ENCODE measurements at regions of chr3 and their contacts with region 1.

Region 1: GRCh38 chr3:193572426-193572908 is 17.8 kb upstream of the ATP13A4 start:
- DNase-seq: peak; percentile 71 to 87 (median 75)
- H3K4me3 ChIP-seq: no peak overlapping the region
- H3K27ac ChIP-seq: no peak overlapping the region
- H3K4me1 ChIP-seq: no peaks in the 10 kb centered on the region
- H3K27me3 ChIP-seq: no peaks in the 10 kb centered on the region
- CTCF ChIP-seq: peak; percentile 63 to 82 (median 78)
- POLR2A ChIP-seq: peak in 1 of 2 donors; percentile 11

Region 2: DNA sequence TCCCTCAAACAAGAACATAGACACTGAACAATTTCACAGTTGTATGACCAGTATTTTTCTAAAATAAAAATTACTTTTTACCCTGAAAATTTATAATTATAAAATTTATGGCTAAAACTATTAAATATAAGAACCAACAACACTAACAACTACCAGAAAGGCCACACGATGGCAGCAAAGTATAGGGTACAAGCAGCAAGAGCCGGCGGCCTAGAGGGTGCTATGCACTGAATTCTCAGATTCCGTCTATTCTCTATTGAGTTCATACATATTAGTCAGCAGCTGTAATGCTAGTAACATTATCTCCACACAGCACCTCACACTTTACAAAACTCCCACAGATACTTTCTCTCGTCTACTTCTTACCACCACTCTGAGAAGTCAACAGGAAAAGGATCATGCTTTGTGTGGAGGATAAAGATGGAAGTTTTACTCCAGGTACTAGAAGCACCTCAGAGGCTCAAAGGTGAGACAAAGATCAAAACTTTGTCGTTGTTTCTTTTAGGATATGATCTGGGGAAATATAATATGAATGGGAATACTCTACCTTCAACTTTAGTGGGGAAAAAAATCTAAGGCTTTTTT is 1005.7 kb before region 1 on chr3:
- intact Hi-C with region 1: loop called in 1 of 2 experiments (anchors 5 kb)
- DNase-seq: peak; percentile 68 to 92 (median 87)
- H3K4me3 ChIP-seq: no peak overlapping the region
- H3K27ac ChIP-seq: no peak overlapping the region
- H3K4me1 ChIP-seq: peaks cover 0 to 17% of the 10 kb centered on the region in 2 donors
- H3K27me3 ChIP-seq: no peaks in the 10 kb centered on the region
- CTCF ChIP-seq: peak; percentile 64 to 88 (median 74)
- POLR2A ChIP-seq: no peak

Region 3: GRCh38 chr3:192802957-192803899 is 769.2 kb before region 1 on chr3:
- intact Hi-C with region 1: loop called in 1 of 2 experiments (anchors 10 kb)
- DNase-seq: no peak
- H3K4me3 ChIP-seq: no peak overlapping the region
- H3K27ac ChIP-seq: no peak overlapping the region
- H3K4me1 ChIP-seq: no peaks in the 10 kb centered on the region
- H3K27me3 ChIP-seq: no peaks in the 10 kb centered on the region
- CTCF ChIP-seq: peak; percentile 46 to 63 (median 54)
- POLR2A ChIP-seq: no peak

Region 4: GRCh38 chr3:192816351-192816750 is 756.1 kb before region 1 on chr3:
- intact Hi-C with region 1: loop called in 1 of 2 experiments (anchors 5 kb)
- DNase-seq: peak in 1 of 7 donors; percentile 37
- H3K4me3 ChIP-seq: no peak overlapping the region
- H3K27ac ChIP-seq: no peak overlapping the region
- H3K4me1 ChIP-seq: no peaks in the 10 kb centered on the region
- H3K27me3 ChIP-seq: no peaks in the 10 kb centered on the region
- CTCF ChIP-seq: peak; percentile 55 to 86 (median 78)
- POLR2A ChIP-seq: no peak

Region 5: GRCh38 chr3:193040836-193041672 is 531.4 kb before region 1 on chr3:
- intact Hi-C with region 1: loop called in 1 of 2 experiments (anchors 10 kb)
- DNase-seq: peak in 2 of 7 donors; percentile 1 to 14
- H3K4me3 ChIP-seq: no peak overlapping the region
- H3K27ac ChIP-seq: no peak overlapping the region
- H3K4me1 ChIP-seq: no peaks in the 10 kb centered on the region
- H3K27me3 ChIP-seq: no peaks in the 10 kb centered on the region
- CTCF ChIP-seq: peak; percentile 52 to 87 (median 57)
- POLR2A ChIP-seq: no peak

Region 6: DNA sequence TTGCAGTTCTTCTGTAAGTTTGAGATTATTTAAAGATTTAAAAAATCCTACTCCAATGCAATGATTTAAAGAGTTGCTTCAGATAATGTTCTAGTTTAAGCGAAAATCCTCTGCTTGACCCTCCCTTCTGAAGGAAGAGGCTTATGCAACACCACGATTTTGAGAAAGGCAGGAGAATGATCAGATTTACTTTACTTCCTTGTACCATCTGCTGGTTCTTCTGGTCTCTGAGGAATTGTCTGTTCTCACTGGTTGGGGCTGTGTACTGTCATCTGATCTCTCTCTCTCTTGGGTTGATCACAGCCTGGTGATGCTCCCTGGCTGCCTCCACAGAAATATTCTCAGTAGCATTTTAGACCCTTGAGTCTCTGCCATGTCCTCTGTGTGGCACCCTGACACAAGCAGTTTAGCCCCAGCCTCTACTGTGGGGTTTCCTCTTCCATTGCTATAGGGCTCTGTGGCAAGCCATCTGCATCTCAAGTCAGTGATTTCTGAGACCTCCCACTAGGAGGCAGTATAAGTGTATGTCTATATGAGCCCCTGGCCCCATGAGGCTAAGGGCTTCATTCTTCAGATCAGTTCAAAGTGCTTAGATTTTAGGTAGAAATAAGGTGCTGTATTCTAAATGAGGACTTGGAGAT is 382.2 kb before region 1 on chr3:
- intact Hi-C with region 1: loop called in 1 of 2 experiments (anchors 5 kb)
- DNase-seq: peak in 6 of 7 donors; percentile 16 to 59 (median 23)
- H3K4me3 ChIP-seq: no peak overlapping the region
- H3K27ac ChIP-seq: no peak overlapping the region
- H3K4me1 ChIP-seq: no peaks in the 10 kb centered on the region
- H3K27me3 ChIP-seq: no peaks in the 10 kb centered on the region
- CTCF ChIP-seq: peak; percentile 25 to 56 (median 42)
- POLR2A ChIP-seq: no peak

Region 7: GRCh38 chr3:193297421-193297820 is 275.0 kb before region 1 on chr3:
- intact Hi-C with region 1: no loop called
- DNase-seq: no peak
- H3K4me3 ChIP-seq: no peak overlapping the region
- H3K27ac ChIP-seq: no peak overlapping the region
- H3K4me1 ChIP-seq: no peaks in the 10 kb centered on the region
- H3K27me3 ChIP-seq: no peaks in the 10 kb centered on the region
- CTCF ChIP-seq: no peak
- POLR2A ChIP-seq: no peak

Region 8: DNA sequence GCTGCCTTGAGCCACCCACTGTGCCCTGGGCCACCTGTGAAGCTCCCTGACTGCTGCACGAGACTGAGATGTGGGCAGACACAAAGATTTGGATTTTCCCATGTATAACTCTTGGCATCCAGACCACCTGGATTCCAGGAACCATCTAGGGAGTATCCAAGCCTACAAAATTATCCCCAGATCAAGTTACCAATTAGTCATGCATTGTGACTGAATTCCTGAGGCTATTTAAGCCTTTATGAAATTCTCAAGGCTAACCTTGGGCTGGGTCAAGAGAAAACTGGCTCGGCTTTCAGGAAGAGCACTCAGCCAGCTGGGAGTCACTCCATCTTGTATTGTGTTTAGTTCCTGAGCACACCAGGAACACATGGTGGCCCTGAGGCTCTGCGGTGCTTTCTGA is 180.6 kb before region 1 on chr3:
- intact Hi-C with region 1: no loop called
- DNase-seq: peak; percentile 27 to 60 (median 50)
- H3K4me3 ChIP-seq: no peak overlapping the region
- H3K27ac ChIP-seq: peak overlapping the region in 1 of 5 donors; percentile 49
- H3K4me1 ChIP-seq: no peaks in the 10 kb centered on the region
- H3K27me3 ChIP-seq: no peaks in the 10 kb centered on the region
- CTCF ChIP-seq: no peak
- POLR2A ChIP-seq: no peak

Region 9: DNA sequence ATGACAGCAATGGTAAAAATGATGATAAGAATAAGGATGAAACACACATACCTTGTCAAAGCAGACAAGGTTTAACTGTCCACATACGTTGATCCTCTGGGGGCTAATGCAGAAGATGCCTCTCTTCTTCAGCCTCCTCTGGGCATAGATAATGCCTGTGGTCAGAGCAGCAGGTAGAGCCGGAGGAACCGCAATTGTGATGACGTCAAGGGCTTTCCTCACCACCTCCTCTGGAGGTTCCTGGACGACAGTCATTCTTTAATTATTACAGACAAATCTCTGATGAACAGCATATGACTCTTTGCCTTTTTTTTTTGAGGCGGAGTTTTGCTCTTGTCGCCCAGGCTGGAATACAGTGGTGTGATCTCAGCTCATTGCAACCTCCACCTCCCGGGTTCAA is 107.6 kb before region 1 on chr3:
- intact Hi-C with region 1: loop called (anchors 5 kb)
- DNase-seq: no peak
- H3K4me3 ChIP-seq: no peak overlapping the region
- H3K27ac ChIP-seq: no peak overlapping the region
- H3K4me1 ChIP-seq: no peaks in the 10 kb centered on the region
- H3K27me3 ChIP-seq: no peaks in the 10 kb centered on the region
- CTCF ChIP-seq: no peak
- POLR2A ChIP-seq: no peak

Measured in adrenal gland (tissue), 19 donors.